CD8-positive, alpha-beta T cell (primary cell): ENCODE measurements at regions of chr17 and their contacts with region 1.

Region 1: GRCh38 chr17:70675070-70675590 is 505.8 kb downstream of the KCNJ2 start:
- DNase-seq: no peak
- ATAC-seq: no peak
- H3K4me3 ChIP-seq: no peak overlapping the region
- H3K4me3 Mint-ChIP-seq: no peak overlapping the region
- H3K27ac ChIP-seq: no peak overlapping the region
- H3K27ac Mint-ChIP-seq: no peak overlapping the region
- H3K4me1 ChIP-seq: no peaks in the 10 kb centered on the region
- H3K4me1 Mint-ChIP-seq: no peaks in the 10 kb centered on the region
- H3K27me3 ChIP-seq: no peaks in the 10 kb centered on the region
- H3K27me3 Mint-ChIP-seq: no peaks in the 10 kb centered on the region
- CTCF ChIP-seq: no peak

Region 2: DNA sequence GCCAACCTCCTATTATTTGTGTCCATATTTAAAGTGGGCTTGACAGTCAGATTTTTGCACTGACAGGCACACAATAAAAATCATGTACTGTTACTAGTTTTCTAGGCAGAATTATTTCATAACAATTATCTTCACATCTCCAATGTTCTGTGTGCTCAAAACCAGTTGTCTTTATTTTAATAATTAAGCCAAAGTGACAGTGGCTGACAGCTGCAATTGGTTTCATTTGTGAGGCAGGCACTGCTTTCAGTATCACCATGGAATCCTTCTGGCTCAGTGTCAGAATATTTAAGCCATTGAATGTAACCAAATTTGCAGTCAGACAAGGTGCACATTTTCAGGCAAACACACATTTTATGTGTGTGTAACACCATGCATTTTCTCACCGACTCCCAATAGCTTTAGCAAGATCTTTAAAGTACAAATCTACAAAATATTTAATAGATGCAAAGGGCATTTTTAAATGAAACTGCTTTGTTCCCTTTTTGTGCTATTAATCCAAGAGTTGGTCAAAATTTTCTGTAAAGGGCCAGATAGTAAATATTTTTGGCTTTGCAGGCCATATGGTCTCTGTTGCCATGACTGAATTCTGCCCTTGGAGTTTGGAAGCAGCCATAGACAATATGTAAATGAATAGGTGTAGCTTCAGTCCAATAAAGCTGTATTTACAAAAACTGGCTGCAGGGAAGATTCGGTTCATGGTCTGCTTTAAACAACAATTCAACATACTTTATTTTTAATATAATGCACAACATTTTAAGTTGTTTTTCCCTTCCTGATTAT is 19.8 kb before region 1 on chr17:
- CTCF ChIA-PET with region 1: no interaction called
- POLR2A ChIA-PET with region 1: no interaction called
- intact Hi-C with region 1: loop called in 1 of 2 experiments (anchors 2 kb)
- DNase-seq: no peak
- ATAC-seq: no peak
- H3K4me3 ChIP-seq: no peak overlapping the region
- H3K4me3 Mint-ChIP-seq: no peak overlapping the region
- H3K27ac ChIP-seq: no peak overlapping the region
- H3K27ac Mint-ChIP-seq: no peak overlapping the region
- H3K4me1 ChIP-seq: no peaks in the 10 kb centered on the region
- H3K4me1 Mint-ChIP-seq: no peaks in the 10 kb centered on the region
- H3K27me3 ChIP-seq: no peaks in the 10 kb centered on the region
- H3K27me3 Mint-ChIP-seq: peaks cover 4% of the 10 kb centered on the region
- CTCF ChIP-seq: no peak

Region 3: GRCh38 chr17:70736375-70736957 is 61.3 kb after region 1 on chr17:
- CTCF ChIA-PET with region 1: no interaction called
- POLR2A ChIA-PET with region 1: no interaction called
- intact Hi-C with region 1: no loop called
- DNase-seq: no peak
- ATAC-seq: no peak
- H3K4me3 ChIP-seq: no peak overlapping the region
- H3K4me3 Mint-ChIP-seq: no peak overlapping the region
- H3K27ac ChIP-seq: no peak overlapping the region
- H3K27ac Mint-ChIP-seq: no peak overlapping the region
- H3K4me1 ChIP-seq: no peaks in the 10 kb centered on the region
- H3K4me1 Mint-ChIP-seq: no peaks in the 10 kb centered on the region
- H3K27me3 ChIP-seq: no peaks in the 10 kb centered on the region
- H3K27me3 Mint-ChIP-seq: no peaks in the 10 kb centered on the region
- CTCF ChIP-seq: no peak